ENCODE measurements at regions of chr2 and their contacts with region 1.

Region 1: DNA sequence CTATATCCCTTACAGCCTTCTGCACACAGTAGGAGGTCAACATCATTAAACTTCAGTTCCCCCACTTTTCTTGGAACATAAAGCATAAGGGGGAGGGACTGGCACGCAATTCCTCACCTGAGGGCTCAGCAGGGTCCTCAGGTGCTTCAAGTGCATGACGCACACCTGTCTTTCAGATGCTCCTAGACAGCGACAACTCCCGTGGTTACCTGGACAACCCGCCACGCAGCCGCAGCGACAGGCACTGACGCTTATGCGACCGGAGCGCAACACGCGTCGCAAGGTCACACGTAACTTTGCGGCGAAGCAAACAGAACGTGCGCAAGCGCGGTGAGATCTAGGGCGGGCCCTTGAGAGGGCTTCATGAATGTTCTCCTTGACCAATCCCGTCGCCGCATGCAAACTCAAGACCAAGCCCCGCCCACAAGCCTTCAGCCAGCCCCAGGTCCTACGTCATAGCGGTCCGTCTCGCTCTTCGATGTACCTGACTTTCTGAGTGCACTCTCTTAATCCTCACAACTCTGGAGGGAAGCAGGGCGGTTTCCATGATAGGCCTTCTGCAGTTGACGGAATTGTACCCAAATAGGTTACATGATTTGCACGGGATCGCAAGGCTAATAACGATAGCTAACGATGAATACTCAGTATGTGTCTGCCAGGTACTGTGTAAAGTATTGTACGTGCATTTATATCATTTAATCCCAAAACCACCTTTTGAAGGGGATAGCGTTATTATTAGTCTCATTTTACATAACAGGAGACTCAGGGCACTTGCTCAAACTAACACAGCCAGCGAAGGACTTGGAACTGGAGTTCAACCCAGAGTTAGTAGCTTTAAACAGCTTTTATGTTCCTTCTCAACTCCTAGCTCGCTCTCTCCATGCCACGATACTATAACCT is at the start of gene IFT172:
- DNase-seq: peak; percentile 99
- H3K4me3 ChIP-seq: peak within 1 kb of the TSS; percentile 38 to 70 (median 65)
- H3K27ac ChIP-seq: peak within 1 kb of the TSS; percentile 74
- H3K4me1 ChIP-seq: peaks cover 23% of the 10 kb centered on the region
- H3K27me3 ChIP-seq: no peaks in the 10 kb centered on the region
- CTCF ChIP-seq: no peak
- total RNA-seq, gene IFT172: 11.5 to 12.1 TPM

Region 2: DNA sequence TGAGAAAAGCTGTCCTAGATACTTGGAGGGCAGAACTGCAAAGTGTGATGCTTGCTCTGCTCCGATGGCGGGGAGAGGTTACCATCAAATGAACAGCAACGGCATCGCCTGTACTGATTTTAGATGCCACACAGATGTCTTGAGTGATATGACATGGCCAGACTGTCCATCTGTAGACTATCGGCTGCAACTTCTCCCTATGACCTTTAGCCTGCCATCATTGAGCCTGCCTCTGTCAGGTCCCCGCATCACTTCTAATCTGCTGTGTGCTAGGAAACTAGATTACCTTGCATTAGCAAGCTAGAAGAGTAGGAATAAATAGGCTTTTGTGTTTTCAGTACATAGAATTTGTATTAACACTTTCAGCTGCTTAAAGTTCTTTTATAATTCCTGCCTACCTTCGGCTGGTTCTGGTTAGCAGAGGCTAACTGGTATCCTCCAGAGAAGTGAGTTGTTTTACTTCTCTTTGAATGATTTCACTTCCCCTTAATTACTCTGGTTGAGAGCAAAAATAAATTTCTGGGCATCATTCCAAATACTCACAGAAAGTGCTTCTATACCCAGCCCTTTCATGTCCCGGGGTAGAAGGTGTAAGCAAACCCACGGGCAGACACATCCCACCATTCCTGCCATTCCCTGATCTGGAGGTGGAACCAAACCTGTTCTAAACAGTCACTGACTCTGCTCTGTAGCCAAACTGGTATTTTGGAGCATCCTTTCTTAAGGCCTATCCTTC is 1292.9 kb before region 1 on chr2:
- CTCF ChIA-PET with region 1: no interaction called
- dilution Hi-C with region 1: no loop called
- in situ Hi-C with region 1: no loop called
- intact Hi-C with region 1: no loop called
- DNase-seq: no peak
- H3K4me3 ChIP-seq: no peak overlapping the region
- H3K27ac ChIP-seq: no peak overlapping the region
- H3K4me1 ChIP-seq: no peaks in the 10 kb centered on the region
- H3K27me3 ChIP-seq: no peaks in the 10 kb centered on the region
- CTCF ChIP-seq: no peak

Region 3: GRCh38 chr2:27428213-27428977 is 61.4 kb before region 1 on chr2 and contains the start of gene NRBP1:
- CTCF ChIA-PET with region 1: no interaction called
- dilution Hi-C with region 1: no loop called
- in situ Hi-C with region 1: no loop called
- intact Hi-C with region 1: loop called (anchors 2 kb)
- DNase-seq: peak; percentile 89
- H3K4me3 ChIP-seq: peak within 1 kb of the TSS; percentile 86 to 100 (median 92)
- H3K27ac ChIP-seq: peak within 1 kb of the TSS; percentile 86
- H3K4me1 ChIP-seq: peaks cover 14% of the 10 kb centered on the region
- H3K27me3 ChIP-seq: no peaks in the 10 kb centered on the region
- CTCF ChIP-seq: peak in 1 of 2 donors; percentile 5
- total RNA-seq, gene NRBP1: 92.9 to 93.4 TPM

Region 4: DNA sequence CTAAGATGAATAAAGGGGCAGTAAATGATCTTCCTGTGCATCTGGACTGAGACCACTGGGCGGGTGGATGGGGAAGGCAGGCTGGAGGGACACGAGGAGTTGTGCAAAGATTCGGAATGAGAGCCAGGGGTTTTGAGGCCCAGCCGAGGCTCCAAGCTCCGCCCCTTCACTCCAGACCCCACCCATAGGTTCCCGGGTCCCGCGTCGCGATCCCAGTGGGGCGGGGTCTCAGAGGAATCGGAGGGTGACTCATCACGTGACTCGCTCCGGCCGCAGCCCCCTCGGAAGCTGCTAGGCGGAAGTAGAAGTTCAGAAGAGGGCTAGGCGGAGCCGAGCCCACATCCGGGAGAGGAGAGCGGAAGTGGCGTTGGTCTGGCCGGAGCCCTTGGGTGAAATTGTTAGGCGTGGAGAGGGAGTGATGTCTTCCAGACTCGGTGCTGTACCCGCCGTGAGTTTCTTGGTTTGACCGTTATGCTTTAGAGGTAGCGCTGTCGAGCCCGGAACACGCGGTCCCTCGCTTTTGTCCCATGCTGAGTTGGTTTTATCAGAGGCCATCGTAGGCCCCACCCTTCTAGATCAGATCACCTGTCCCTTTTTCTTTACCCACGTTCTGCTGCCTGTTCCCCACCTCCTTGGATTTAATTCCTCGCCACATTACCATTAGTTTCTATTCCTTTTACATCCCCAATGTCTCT is 93.1 kb after region 1 on chr2 and contains the start of gene ZNF512:
- CTCF ChIA-PET with region 1: interaction called, 7 read pairs
- dilution Hi-C with region 1: no loop called
- in situ Hi-C with region 1: no loop called
- intact Hi-C with region 1: loop called (anchors 5 kb)
- DNase-seq: peak; percentile 58
- H3K4me3 ChIP-seq: peak within 1 kb of the TSS; percentile 51 to 64 (median 60)
- H3K27ac ChIP-seq: peak within 1 kb of the TSS; percentile 69
- H3K4me1 ChIP-seq: peaks cover 31% of the 10 kb centered on the region
- H3K27me3 ChIP-seq: no peaks in the 10 kb centered on the region
- CTCF ChIP-seq: peak in 1 of 2 donors; percentile 16
- total RNA-seq, gene ZNF512: 13.7 to 17.2 TPM

Region 5: GRCh38 chr2:27628767-27629709 is 139.3 kb after region 1 on chr2 and contains the starts of genes CCDC121 and GPN1:
- CTCF ChIA-PET with region 1: no interaction called
- dilution Hi-C with region 1: no loop called
- in situ Hi-C with region 1: no loop called
- intact Hi-C with region 1: loop called (anchors 1 kb)
- DNase-seq: peak; percentile 93
- H3K4me3 ChIP-seq: peak within 1 kb of the TSS; percentile 56 to 90 (median 70)
- H3K27ac ChIP-seq: peak within 1 kb of the TSS; percentile 90
- H3K4me1 ChIP-seq: peaks cover 23% of the 10 kb centered on the region
- H3K27me3 ChIP-seq: no peaks in the 10 kb centered on the region
- CTCF ChIP-seq: no peak
- total RNA-seq, gene CCDC121: 1.2 to 1.9 TPM
- total RNA-seq, gene GPN1: 42.9 to 46.8 TPM